Activated CD4-positive, alpha-beta T cell treated with anti-CD3 and anti-CD28 coated beads for 36 hours (primary cell): ENCODE measurements at regions of chr6 and their contacts with region 1.

Region 1: GRCh38 chr6:30483677-30484279 is 5.5 kb upstream of the HLA-E start:
- DNase-seq: no peak
- ATAC-seq: no peak
- H3K4me3 Mint-ChIP-seq: no peak overlapping the region
- H3K27ac Mint-ChIP-seq: no peak overlapping the region
- H3K4me1 Mint-ChIP-seq: peaks cover 39% of the 10 kb centered on the region
- H3K27me3 Mint-ChIP-seq: peaks cover 28% of the 10 kb centered on the region

Region 2: DNA sequence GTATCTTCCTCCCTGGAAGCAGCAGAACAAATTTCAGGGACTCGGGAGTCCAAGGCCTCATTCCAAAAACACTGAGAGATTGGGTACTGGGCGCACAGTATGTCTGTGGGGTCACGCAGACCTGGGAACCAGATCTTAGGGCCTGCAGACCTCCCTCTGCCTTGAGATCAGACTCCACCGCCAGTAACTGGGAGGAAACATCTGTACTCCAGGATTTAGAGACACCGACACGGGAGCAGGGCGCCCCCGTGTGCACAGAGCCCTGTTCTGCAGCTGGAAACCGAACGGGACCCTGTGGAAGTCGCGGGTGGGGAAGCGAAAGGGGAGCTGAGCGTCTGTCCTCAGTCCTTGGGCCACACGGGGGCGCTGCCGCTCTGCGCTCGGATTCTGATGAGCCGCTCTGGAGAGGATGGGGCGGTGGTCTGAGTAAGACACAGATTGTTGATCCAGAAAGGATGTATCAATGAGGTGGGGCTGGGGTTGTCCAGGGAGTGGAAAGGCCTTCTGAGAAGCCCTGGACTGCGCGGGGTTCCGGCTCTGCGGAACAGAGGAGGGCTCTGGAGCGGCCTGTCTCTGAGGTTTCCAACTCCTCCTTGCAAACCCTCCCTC is 30.2 kb before region 1 on chr6:
- CTCF ChIA-PET with region 1: interaction called, 15 read pairs
- POLR2A ChIA-PET with region 1: interaction called, 4 read pairs
- intact Hi-C with region 1: no loop called
- DNase-seq: peak; percentile 93
- ATAC-seq: peak; percentile 85
- H3K4me3 Mint-ChIP-seq: peak overlapping the region; percentile 55
- H3K27ac Mint-ChIP-seq: no peak overlapping the region
- H3K4me1 Mint-ChIP-seq: peaks cover 37% of the 10 kb centered on the region
- H3K27me3 Mint-ChIP-seq: peaks cover 83% of the 10 kb centered on the region

Region 3: DNA sequence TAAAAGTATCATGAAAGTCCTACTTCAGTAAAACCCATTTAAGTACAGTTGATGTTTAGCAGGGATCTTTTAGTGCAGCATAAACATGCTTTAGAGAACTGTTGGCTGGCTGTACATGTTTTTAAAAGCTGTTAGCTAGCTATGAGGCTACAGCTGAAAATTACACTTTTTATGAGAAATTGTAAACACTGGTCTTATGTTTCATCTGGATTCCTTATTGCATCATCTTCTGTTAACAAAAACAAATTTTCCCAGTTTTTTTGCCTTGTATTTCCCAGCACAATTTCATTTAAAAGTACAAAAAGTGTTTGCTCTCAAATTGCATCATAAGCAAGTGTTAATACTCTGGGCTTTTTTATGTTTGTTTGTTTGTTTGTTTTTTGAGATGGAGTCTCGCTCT is 12.8 kb before region 1 on chr6:
- CTCF ChIA-PET with region 1: interaction called, 19 read pairs
- POLR2A ChIA-PET with region 1: no interaction called
- intact Hi-C with region 1: no loop called
- DNase-seq: no peak
- ATAC-seq: no peak
- H3K4me3 Mint-ChIP-seq: no peak overlapping the region
- H3K27ac Mint-ChIP-seq: no peak overlapping the region
- H3K4me1 Mint-ChIP-seq: peaks cover 6% of the 10 kb centered on the region
- H3K27me3 Mint-ChIP-seq: peaks cover 57% of the 10 kb centered on the region

Region 4: DNA sequence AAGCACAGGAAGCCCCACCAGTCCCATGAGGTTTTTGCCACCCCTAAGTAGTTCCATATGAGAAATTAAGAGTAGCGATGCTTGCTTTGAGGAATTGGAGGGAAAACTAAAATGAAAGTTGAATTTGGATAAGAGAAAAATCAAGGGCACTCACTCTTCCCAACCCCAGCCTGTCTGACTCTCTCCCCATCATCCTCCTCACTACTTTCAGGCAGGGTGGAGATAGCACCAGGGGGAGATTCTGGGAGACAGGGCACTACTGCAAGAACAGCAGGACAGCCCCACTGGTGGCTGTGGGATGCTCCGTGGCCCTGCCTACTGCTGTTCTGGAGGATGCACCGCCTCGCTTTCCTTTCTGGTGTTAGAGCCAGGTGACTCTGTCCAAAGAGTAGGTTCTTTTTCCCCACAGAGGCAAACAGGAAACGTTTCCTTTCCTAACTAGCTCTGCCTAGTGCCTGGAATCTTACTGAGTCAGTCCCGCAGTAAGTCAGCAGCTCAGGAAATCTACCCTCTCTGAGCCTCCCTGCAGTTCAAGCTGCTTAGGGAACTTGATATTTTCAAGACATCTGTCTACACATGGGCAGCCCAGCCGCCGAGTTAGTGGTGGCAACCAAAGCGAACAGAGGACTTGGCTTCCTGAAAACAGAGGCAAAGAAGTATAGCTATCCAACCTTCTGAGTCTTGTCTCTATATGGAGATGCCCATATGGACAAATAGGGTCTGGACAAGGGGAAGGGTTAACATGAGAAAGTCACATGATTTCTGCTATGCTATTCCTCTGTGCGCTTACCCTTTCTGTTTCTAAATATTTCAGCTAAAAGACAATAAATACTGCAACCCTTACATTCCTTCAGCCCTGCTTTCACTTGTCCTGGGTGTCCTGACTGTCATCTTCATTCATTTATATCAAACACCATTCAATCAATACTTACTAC is 16.9 kb after region 1 on chr6:
- CTCF ChIA-PET with region 1: interaction called, 11 read pairs
- POLR2A ChIA-PET with region 1: no interaction called
- intact Hi-C with region 1: no loop called
- DNase-seq: peak; percentile 43
- ATAC-seq: peak; percentile 37
- H3K4me3 Mint-ChIP-seq: peak overlapping the region; percentile 65
- H3K27ac Mint-ChIP-seq: peak overlapping the region; percentile 88
- H3K4me1 Mint-ChIP-seq: peaks cover 43% of the 10 kb centered on the region
- H3K27me3 Mint-ChIP-seq: no peaks in the 10 kb centered on the region

Region 5: DNA sequence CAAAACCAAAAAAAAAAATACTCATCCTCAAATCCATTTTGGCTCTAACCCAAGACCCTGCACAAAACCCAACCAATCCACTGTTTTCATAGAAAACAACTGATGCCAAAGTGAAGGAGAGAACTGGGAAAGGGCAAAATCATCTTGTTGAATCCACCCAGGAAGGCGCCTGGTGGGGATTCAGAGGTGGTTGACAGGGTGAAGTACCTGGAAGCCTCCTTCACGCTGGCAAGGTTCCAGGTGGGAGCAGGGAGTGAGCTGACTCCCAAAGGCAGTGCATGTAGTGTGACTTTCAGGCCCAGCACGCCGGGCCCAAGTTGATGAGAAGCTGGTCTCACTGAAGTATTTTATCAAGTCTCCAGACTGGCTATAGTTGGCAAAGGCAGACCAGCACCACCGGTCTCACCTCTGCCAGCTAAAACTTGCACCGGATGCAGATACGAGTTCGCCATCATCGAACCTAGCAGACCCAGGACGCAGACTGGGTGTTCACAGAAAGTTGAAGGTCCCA is 116.7 kb after region 1 on chr6:
- CTCF ChIA-PET with region 1: interaction called, 68 read pairs
- POLR2A ChIA-PET with region 1: interaction called, 3 read pairs
- intact Hi-C with region 1: loop called (anchors 1 kb)
- DNase-seq: no peak
- ATAC-seq: no peak
- H3K4me3 Mint-ChIP-seq: no peak overlapping the region
- H3K27ac Mint-ChIP-seq: no peak overlapping the region
- H3K4me1 Mint-ChIP-seq: peaks cover 17% of the 10 kb centered on the region
- H3K27me3 Mint-ChIP-seq: no peaks in the 10 kb centered on the region

Region 6: GRCh38 chr6:30672445-30673253 is 188.9 kb after region 1 on chr6 and contains the start of gene DHX16:
- CTCF ChIA-PET with region 1: interaction called, 6 read pairs
- POLR2A ChIA-PET with region 1: no interaction called
- intact Hi-C with region 1: loop called (anchors 2 kb)
- DNase-seq: peak; percentile 93
- ATAC-seq: peak; percentile 83
- H3K4me3 Mint-ChIP-seq: peak within 1 kb of the TSS; percentile 82
- H3K27ac Mint-ChIP-seq: peak within 1 kb of the TSS; percentile 83
- H3K4me1 Mint-ChIP-seq: peaks cover 27% of the 10 kb centered on the region
- H3K27me3 Mint-ChIP-seq: no peaks in the 10 kb centered on the region
- total RNA-seq, gene DHX16: 34.5 to 36.7 TPM

Region 7: DNA sequence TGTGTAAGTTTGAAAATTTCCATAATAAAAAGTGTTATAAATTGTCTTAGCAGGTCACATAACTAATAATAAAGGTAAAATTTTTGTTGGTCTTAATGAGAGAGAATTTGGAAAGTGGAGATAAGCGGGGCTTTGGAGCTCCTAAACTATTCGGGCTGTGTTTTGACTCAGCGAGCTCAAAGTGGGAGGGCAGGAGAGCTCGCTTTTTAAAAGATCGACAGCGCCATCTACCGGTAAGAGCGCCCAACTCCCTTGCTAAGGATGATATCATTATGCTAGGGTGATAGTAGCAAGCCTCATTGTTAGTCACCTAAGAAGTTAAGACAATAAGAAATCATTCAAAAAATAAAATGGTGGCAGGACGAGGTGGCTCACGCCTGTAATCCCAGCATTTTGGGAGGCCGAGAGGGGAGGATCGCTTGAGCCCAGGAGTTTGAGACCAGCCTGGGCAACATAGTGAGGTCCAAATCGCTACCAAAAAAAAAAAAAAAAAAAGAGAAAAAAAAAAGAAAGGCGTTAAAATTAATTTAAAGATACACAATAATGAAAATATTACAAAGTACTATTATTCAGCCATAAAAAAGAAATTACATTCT is 603.8 kb after region 1 on chr6:
- CTCF ChIA-PET with region 1: interaction called, 3 read pairs
- POLR2A ChIA-PET with region 1: no interaction called
- intact Hi-C with region 1: loop called in 1 of 2 experiments (anchors 5 kb)
- DNase-seq: peak; percentile 94
- ATAC-seq: peak; percentile 96
- H3K4me3 Mint-ChIP-seq: no peak overlapping the region
- H3K27ac Mint-ChIP-seq: no peak overlapping the region
- H3K4me1 Mint-ChIP-seq: peaks cover 13% of the 10 kb centered on the region
- H3K27me3 Mint-ChIP-seq: no peaks in the 10 kb centered on the region